ENCODE measurements at regions of chr1 and their contacts with region 1.

Region 1: DNA sequence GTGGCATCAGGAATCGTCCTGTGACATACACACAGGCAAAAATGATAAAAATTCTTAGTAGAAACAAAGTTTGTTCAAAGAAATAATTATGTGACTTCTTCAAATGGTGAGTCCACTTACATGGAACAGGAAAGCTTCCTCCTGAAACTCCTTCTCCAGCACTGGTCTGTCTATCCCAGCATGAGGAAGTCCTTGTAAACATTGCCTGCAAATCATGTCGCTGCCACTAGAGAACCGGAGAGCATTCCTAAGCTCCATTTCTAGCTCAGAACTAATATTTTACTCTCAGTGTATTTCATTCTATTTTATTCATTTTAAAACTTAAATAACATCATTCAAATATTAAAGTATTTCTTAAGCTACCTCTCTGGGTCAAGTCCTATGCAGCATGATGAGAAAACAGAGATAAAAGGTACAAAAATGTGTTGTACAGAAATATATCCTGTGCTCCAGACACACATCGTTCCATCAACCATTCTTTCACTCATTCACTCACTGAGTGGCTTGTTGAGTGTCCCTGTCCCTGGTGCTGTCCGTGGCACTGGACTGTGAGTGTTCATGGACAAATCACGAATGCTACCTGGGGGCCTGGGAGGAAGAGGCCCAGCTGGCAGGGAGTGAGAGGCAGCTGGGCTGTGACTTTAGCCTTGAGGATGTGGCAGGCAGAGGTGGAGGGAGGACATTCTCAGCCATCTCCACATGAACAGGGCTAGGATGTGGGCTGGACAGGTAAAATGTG is 10.0 kb downstream of the CYP4A22 start:
- DNase-seq: no peak
- H3K4me3 ChIP-seq: no peak overlapping the region
- H3K4me3 Mint-ChIP-seq: no peak overlapping the region
- H3K27ac ChIP-seq: no peak overlapping the region
- H3K27ac Mint-ChIP-seq: no peak overlapping the region
- H3K4me1 ChIP-seq: no peaks in the 10 kb centered on the region
- H3K4me1 Mint-ChIP-seq: no peaks in the 10 kb centered on the region
- H3K27me3 ChIP-seq: no peaks in the 10 kb centered on the region
- H3K27me3 Mint-ChIP-seq: peaks cover 0 to 12% (median 6%) of the 10 kb centered on the region in 3 donors
- CTCF ChIP-seq: no peak

Region 2: DNA sequence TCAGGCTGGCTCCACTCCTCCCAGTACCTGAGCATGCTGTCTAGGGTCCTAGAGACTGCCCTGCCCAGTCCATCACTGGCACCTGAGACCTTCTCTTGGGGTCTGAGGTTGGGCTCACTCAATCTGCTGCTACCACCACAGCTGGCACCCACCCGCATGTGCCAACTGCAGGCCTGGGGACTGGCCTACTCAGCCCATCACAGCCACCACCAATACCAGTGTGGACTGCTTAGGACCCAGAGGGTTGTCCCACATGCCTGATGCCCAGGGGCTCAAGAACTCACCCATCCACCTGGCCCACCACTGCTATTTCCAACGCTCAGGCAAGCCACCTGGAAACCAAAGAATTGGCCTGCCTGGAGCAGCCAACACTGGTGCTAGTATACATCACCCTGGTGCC is 284.9 kb before region 1 on chr1:
- intact Hi-C with region 1: no loop called
- DNase-seq: no peak
- H3K4me3 ChIP-seq: no peak overlapping the region
- H3K4me3 Mint-ChIP-seq: no peak overlapping the region
- H3K27ac ChIP-seq: no peak overlapping the region
- H3K27ac Mint-ChIP-seq: no peak overlapping the region
- H3K4me1 ChIP-seq: no peaks in the 10 kb centered on the region
- H3K4me1 Mint-ChIP-seq: peaks cover 5% of the 10 kb centered on the region
- H3K27me3 ChIP-seq: peaks cover 0 to 7% of the 10 kb centered on the region in 2 donors
- H3K27me3 Mint-ChIP-seq: peaks cover 1 to 14% (median 5%) of the 10 kb centered on the region in 3 donors
- CTCF ChIP-seq: no peak

Region 3: GRCh38 chr1:46927249-46927835 is 219.9 kb before region 1 on chr1:
- intact Hi-C with region 1: loop called in 1 of 2 experiments (anchors 5 kb)
- DNase-seq: no peak
- H3K4me3 ChIP-seq: no peak overlapping the region
- H3K4me3 Mint-ChIP-seq: no peak overlapping the region
- H3K27ac ChIP-seq: no peak overlapping the region
- H3K27ac Mint-ChIP-seq: no peak overlapping the region
- H3K4me1 ChIP-seq: no peaks in the 10 kb centered on the region
- H3K4me1 Mint-ChIP-seq: no peaks in the 10 kb centered on the region
- H3K27me3 ChIP-seq: no peaks in the 10 kb centered on the region
- H3K27me3 Mint-ChIP-seq: peaks cover 7 to 9% (median 7%) of the 10 kb centered on the region in 3 donors
- CTCF ChIP-seq: no peak

Region 4: GRCh38 chr1:47013239-47013845 is 133.9 kb before region 1 on chr1:
- intact Hi-C with region 1: no loop called
- DNase-seq: no peak
- H3K4me3 ChIP-seq: no peak overlapping the region
- H3K4me3 Mint-ChIP-seq: no peak overlapping the region
- H3K27ac ChIP-seq: no peak overlapping the region
- H3K27ac Mint-ChIP-seq: no peak overlapping the region
- H3K4me1 ChIP-seq: no peaks in the 10 kb centered on the region
- H3K4me1 Mint-ChIP-seq: no peaks in the 10 kb centered on the region
- H3K27me3 ChIP-seq: no peaks in the 10 kb centered on the region
- H3K27me3 Mint-ChIP-seq: peaks cover 3 to 6% (median 5%) of the 10 kb centered on the region in 3 donors
- CTCF ChIP-seq: no peak